Esophagus muscularis mucosa (tissue), 4 donors: ENCODE measurements at regions of chr16 and their contacts with region 1.

Region 1: DNA sequence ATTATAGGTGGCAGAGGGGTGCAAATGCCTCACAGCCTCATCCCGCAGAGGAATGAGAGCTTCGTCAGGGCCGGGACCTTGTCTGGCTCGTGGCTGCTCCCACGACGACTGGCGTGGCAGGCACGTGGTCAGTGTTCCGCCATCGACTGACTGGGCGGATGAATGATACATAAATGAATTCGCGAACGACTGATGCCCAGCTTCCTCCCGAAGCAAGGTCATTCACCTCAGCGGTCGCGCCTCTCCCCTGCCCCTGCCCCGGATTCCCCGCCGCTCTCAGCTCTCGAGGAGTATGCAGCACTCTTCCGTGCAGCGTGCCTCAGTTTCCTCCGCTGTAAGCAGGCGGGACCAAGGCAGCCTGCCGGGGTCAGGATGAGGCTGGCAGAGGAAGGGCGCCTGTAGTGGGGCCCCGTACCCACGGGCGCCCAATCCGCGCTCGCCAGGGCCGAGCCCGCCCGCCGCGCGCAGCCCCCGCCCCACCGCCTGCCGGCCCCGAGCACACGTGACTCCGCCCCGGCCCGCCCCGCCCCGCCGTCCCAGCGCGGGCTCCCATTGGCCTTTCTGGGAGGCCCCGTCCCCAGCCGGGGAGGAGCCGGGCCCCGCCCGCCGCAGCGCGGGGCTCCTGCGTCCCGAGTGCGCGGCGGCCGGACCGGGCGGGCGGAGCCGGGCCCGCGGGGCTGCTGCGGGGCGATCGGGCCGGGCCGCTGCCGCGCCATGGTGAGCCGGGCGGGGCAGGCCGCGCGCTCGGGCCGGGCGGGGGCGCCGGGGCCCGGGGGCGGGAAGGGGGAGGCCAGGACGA is at the start of gene SNN:
- DNase-seq: peak; percentile 93
- H3K4me3 ChIP-seq: peak within 1 kb of the TSS; percentile 73 to 99 (median 96)
- H3K27ac ChIP-seq: peak within 1 kb of the TSS; percentile 78 to 85 (median 84)
- H3K4me1 ChIP-seq: peaks cover 49 to 53% (median 50%) of the 10 kb centered on the region in 4 donors
- H3K27me3 ChIP-seq: no peaks in the 10 kb centered on the region
- CTCF ChIP-seq: no peak
- EP300 ChIP-seq: no peak
- POLR2A ChIP-seq: no peak
- total RNA-seq, gene SNN: 30.7 to 66.9 (median 33.6) TPM

Region 2: GRCh38 chr16:10944249-10945064 is 723.6 kb before region 1 on chr16 and contains the start of gene CLEC16A:
- intact Hi-C with region 1: loop called (anchors 10 kb)
- DNase-seq: peak; percentile 99
- H3K4me3 ChIP-seq: peak within 1 kb of the TSS; percentile 72 to 96 (median 86)
- H3K27ac ChIP-seq: peak within 1 kb of the TSS; percentile 90 to 92 (median 92)
- H3K4me1 ChIP-seq: peaks cover 59 to 71% (median 60%) of the 10 kb centered on the region in 4 donors
- H3K27me3 ChIP-seq: no peaks in the 10 kb centered on the region
- CTCF ChIP-seq: peak in 2 of 3 experiments; percentile 1 to 40
- EP300 ChIP-seq: no peak
- POLR2A ChIP-seq: peak; percentile 32
- total RNA-seq, gene CLEC16A: 22.3 to 34.7 (median 29.2) TPM

Region 3: DNA sequence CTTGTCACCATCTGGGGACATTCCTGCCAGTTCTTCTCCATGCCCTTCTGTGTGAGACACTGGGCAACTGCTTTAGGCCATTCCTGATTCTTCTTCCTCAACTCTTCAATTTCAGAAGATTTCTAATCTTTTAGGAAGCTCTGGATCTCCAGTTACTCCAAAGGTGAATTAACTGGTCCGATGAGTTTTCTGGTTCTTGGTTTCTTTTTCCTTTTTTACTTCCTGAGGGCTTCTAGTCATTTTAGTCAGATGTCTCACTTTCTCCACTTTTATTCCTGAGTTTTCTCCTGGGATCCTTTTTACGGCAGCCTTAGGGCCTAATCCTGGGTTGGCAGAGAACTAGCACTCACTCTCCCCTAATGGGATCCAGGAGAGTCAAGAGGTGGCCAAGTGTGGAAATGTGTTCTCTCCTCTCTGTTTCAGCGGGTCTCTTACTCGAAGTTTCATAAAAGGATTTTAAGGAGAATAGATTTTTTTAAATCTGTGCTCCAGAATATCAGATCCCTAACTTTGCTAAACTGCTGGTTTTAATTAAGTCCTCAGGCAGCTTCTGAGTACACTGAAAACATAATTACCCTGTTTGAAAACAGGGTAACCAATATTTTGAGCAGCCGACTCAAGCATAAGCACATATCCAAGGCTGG is 215.2 kb before region 1 on chr16:
- intact Hi-C with region 1: no loop called
- DNase-seq: no peak
- H3K4me3 ChIP-seq: no peak overlapping the region
- H3K27ac ChIP-seq: peak overlapping the region in 1 of 4 donors; percentile 46
- H3K4me1 ChIP-seq: peaks cover 0 to 6% (median 0%) of the 10 kb centered on the region in 4 donors
- H3K27me3 ChIP-seq: no peaks in the 10 kb centered on the region
- CTCF ChIP-seq: no peak
- EP300 ChIP-seq: no peak
- POLR2A ChIP-seq: no peak

Region 4: GRCh38 chr16:11734025-11734652 is 66.1 kb after region 1 on chr16:
- intact Hi-C with region 1: loop called (anchors 10 kb)
- DNase-seq: no peak
- H3K4me3 ChIP-seq: no peak overlapping the region
- H3K27ac ChIP-seq: peak overlapping the region; percentile 11 to 46 (median 32)
- H3K4me1 ChIP-seq: peaks cover 43 to 66% (median 64%) of the 10 kb centered on the region in 4 donors
- H3K27me3 ChIP-seq: no peaks in the 10 kb centered on the region
- CTCF ChIP-seq: no peak
- EP300 ChIP-seq: no peak
- POLR2A ChIP-seq: no peak